Common myeloid progenitor, CD34-positive (primary cell): ENCODE measurements at regions of chr6 and their contacts with region 1.

Region 1: DNA sequence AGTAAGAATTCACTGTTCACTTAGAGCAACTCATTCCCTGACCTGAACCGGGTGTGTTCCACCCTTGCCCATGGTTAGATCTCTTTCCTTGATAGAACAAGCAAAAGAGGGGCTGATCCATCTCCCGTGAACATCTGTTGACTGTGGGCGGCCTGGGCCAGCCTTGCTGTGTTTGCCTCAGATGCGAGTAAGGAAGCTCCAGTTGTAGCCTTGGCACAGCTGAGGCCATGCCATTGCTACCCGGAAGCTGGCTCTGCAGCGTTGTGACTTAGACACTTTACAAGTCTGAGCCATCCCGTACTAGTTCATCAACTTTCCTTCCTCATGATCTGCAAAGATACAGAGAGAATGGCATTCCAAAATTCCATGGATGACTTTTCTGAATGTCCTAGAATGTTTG is 139.0 kb downstream of the MAP3K4 start:
- DNase-seq: no peak
- H3K4me3 ChIP-seq: no peak overlapping the region
- H3K27ac ChIP-seq: no peak overlapping the region
- H3K4me1 ChIP-seq: no peaks in the 10 kb centered on the region
- H3K27me3 ChIP-seq: no peaks in the 10 kb centered on the region

Region 2: DNA sequence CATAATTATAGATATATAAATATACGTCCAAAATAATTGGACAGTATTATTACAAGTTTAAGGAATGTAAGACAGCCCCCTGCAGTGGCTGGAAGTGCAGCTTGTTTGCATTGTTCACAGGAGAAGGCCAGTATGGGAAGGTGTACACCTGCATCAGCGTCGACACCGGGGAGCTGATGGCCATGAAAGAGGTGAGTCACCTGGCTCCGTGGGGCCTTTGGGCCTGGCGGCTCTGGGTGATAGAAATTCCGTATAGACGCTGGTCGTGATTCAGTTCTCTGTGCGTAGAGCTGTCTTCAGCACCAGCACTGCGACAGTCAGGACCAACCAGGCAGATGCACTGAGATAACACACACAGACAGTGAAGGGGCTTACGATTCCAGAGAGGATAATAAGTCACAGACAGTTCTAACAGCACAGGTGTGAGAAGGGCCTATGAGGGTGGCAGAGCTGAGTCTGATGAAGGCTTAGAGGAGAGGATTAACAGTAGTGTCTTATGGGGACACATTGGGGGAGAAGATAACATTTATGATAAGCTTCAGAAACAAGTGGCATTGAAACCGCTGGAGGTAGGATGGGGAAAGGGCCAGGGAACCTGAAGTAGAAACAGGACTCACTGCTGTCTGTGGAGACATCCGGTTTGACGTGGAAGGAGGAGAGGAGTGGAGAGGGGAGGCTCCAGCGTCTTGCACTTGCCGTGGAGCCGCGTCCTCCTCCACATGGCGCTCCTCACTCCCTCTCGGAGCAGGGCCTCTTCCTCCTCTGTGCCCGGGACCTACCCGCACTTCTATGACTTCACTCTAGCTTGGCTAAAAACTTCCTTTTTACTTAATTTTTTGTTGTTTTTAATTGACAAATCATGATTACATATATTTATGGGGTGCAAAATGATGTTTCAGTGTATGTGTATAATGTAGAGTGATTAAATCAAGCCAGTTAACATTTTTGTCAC is 22.5 kb before region 1 on chr6:
- CTCF ChIA-PET with region 1: no interaction called
- POLR2A ChIA-PET with region 1: no interaction called
- DNase-seq: no peak
- H3K4me3 ChIP-seq: no peak overlapping the region
- H3K27ac ChIP-seq: peak overlapping the region in 1 of 2 experiments; percentile 8
- H3K4me1 ChIP-seq: no peaks in the 10 kb centered on the region
- H3K27me3 ChIP-seq: no peaks in the 10 kb centered on the region

Region 3: GRCh38 chr6:161152907-161153662 is 22.5 kb after region 1 on chr6:
- CTCF ChIA-PET with region 1: interaction called, 11 read pairs
- POLR2A ChIA-PET with region 1: no interaction called
- DNase-seq: peak; percentile 25 to 46 (median 31)
- H3K4me3 ChIP-seq: no peak overlapping the region
- H3K27ac ChIP-seq: no peak overlapping the region
- H3K4me1 ChIP-seq: no peaks in the 10 kb centered on the region
- H3K27me3 ChIP-seq: no peaks in the 10 kb centered on the region